Colonic mucosa (tissue), 4 donors: ENCODE measurements at regions of chr15 and their contacts with region 1.

Region 1: GRCh38 chr15:59611276-59612260 is at the start of gene GCNT3:
- DNase-seq: peak; percentile 74
- H3K4me3 ChIP-seq: peak within 1 kb of the TSS; percentile 38
- H3K27ac ChIP-seq: peak within 1 kb of the TSS; percentile 80
- H3K4me1 ChIP-seq: no peaks in the 10 kb centered on the region
- H3K27me3 ChIP-seq: no peaks in the 10 kb centered on the region
- CTCF ChIP-seq: no peak
- total RNA-seq, gene GCNT3: 261 to 365 TPM

Region 2: DNA sequence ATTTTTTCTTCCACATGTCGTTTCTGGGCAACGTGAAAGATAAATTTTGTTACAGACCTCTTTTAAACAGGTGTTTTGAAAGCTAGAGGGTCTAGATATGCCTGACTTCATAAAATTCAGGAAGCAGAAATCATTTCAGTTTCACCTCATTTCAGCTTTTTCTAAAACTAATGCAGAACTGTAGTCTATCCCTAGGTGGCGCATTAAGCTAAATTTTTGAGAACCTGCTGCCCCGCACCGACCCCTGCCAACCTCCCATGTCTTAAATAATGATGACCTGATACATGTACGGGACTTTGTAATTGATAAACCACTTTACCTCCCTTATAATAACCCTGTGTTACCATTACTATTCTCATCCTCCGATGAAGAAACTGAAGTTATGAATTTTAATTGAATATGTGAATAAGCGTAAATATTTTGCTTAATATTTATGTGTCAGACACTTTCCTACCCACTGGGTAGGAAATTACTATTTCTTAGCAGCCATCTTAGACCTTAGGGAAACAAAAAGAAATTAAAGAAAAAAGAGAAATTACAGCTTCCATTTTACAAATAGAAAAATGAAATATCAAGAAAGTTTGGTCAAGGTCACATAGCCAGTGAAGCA is 78.7 kb before region 1 on chr15:
- intact Hi-C with region 1: loop called (anchors 5 kb)
- DNase-seq: no peak
- H3K4me3 ChIP-seq: no peak overlapping the region
- H3K27ac ChIP-seq: peak overlapping the region; percentile 77
- H3K4me1 ChIP-seq: peaks cover 3% of the 10 kb centered on the region
- H3K27me3 ChIP-seq: no peaks in the 10 kb centered on the region
- CTCF ChIP-seq: peak; percentile 60

Region 3: GRCh38 chr15:59549339-59549807 is 62.2 kb before region 1 on chr15:
- intact Hi-C with region 1: loop called (anchors 5 kb)
- DNase-seq: no peak
- H3K4me3 ChIP-seq: no peak overlapping the region
- H3K27ac ChIP-seq: peak overlapping the region; percentile 95
- H3K4me1 ChIP-seq: peaks cover 19% of the 10 kb centered on the region
- H3K27me3 ChIP-seq: no peaks in the 10 kb centered on the region
- CTCF ChIP-seq: no peak